ENCODE measurements at regions of chr12 and their contacts with region 1.

Region 1: DNA sequence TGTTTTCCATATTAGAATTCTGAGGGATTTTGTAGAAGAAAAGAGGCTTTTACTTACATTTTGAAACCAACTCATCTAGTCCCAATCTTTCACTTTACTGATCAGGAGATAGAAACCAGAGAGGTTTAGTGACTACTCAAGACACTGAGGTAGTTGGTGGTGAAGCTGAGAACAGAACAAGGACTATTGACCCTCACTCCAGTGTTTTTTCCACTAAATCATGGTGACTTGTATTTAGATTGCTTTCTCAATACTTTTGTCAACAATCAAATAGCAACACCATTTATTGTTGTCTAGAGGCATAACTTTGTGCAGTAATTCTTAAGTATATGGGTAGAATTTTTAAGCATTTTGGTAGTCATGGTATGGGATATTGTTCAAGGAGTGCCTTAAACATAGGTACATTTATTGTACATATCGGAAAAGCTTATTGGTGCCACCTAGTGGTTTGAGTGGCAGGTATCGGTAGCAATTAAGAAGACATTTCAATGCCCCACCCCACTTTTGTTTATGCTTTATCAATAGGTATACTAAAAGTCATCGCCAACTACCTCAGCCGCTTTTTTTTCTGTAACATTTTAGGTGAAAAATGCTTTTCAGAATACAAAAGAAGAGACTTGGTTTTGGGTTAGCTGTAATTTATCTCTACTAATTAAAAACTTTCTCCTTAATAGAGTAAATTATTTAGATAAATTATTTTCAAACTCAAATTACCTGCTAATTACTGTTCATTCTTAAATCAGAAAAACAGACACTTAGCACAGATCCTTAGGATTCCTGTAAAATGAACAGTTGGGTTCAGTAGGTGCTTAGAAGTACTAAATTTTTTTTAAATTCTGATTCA is 47.3 kb upstream of the PAWR start:
- DNase-seq: no peak
- ATAC-seq: peak; percentile 49
- H3K4me3 Mint-ChIP-seq: no peak overlapping the region
- H3K27ac Mint-ChIP-seq: no peak overlapping the region
- H3K4me1 Mint-ChIP-seq: no peaks in the 10 kb centered on the region
- H3K27me3 Mint-ChIP-seq: peaks cover 5% of the 10 kb centered on the region
- CTCF ChIP-seq: no peak

Region 2: GRCh38 chr12:78146365-78146772 is 1591.7 kb before region 1 on chr12:
- CTCF ChIA-PET with region 1: no interaction called
- POLR2A ChIA-PET with region 1: no interaction called
- intact Hi-C with region 1: loop called (anchors 1 kb)
- DNase-seq: no peak
- ATAC-seq: peak; percentile 47
- H3K4me3 Mint-ChIP-seq: no peak overlapping the region
- H3K27ac Mint-ChIP-seq: no peak overlapping the region
- H3K4me1 Mint-ChIP-seq: no peaks in the 10 kb centered on the region
- H3K27me3 Mint-ChIP-seq: no peaks in the 10 kb centered on the region
- CTCF ChIP-seq: peak; percentile 69

Region 3: DNA sequence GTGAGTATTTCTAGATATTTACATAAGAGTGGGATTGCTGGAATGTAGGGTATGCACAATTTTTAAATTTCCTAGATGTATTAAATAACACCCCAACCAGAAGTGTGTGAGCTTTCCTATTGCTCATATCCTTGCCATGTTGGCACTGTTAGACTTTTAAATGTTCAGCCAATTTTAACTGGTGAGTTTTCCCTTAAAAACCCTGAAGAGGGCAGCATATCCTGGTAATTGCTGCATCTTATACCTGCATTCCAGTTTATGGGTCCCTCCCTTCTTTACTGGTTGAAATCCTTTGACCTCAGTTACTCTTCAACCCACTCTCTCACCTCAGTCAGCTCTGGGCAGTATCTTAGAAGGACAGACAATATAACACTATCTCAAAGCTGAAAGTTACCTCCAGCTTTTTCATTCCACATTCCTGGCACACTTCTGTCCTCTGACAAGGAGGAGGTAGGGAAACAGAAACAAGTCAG is 317.9 kb before region 1 on chr12:
- CTCF ChIA-PET with region 1: interaction called, 9 read pairs
- POLR2A ChIA-PET with region 1: no interaction called
- intact Hi-C with region 1: loop called (anchors 1 kb)
- DNase-seq: no peak
- ATAC-seq: no peak
- H3K4me3 Mint-ChIP-seq: no peak overlapping the region
- H3K27ac Mint-ChIP-seq: no peak overlapping the region
- H3K4me1 Mint-ChIP-seq: no peaks in the 10 kb centered on the region
- H3K27me3 Mint-ChIP-seq: no peaks in the 10 kb centered on the region
- CTCF ChIP-seq: no peak

Region 4: DNA sequence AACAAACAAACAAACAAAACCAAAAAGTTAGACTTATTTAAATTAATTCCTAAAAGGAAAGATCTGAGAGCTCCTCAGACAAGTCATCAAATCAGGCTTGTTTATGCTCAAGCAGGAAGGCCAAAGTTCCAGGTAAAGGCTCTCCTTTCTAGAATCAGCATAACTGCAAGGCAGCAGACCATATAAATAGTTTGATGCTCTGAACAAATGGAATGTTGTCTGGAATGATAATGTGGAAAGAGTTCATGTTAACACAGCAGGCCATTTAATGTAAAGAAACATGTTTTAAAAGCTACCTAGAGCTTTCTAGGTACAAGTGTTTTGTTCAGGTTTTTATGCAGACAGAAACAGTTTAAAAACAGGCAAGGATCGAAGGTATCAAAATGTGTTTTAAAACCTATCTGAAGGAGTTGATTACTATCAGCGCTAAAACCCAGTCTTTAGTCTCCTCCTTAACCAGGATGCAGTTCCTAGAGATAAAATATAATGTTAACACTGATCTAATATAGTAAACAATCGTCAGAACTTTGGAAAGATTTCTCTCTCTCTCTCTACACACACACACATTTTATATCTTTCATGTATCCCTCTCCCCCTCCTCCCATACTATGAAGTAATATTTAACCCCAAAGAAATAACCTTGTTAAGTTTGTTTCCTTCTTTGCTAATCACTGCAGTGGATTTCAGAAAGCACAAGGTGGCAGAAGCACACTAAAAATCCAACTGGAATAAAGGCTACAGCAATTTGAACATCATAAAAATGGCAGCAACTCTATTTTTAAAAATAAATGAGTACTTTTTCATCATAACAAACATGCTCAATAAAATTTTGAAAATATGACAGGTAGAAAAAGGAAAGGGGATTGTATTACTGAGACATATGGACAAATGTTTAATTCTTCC is 182.8 kb before region 1 on chr12:
- CTCF ChIA-PET with region 1: interaction called, 4 read pairs
- POLR2A ChIA-PET with region 1: no interaction called
- intact Hi-C with region 1: loop called (anchors 1 kb)
- DNase-seq: no peak
- ATAC-seq: no peak
- H3K4me3 Mint-ChIP-seq: no peak overlapping the region
- H3K27ac Mint-ChIP-seq: no peak overlapping the region
- H3K4me1 Mint-ChIP-seq: peaks cover 8% of the 10 kb centered on the region
- H3K27me3 Mint-ChIP-seq: no peaks in the 10 kb centered on the region
- CTCF ChIP-seq: no peak

Region 5: GRCh38 chr12:79911889-79912656 is 174.0 kb after region 1 on chr12:
- CTCF ChIA-PET with region 1: no interaction called
- POLR2A ChIA-PET with region 1: no interaction called
- intact Hi-C with region 1: no loop called
- DNase-seq: no peak
- ATAC-seq: no peak
- H3K4me3 Mint-ChIP-seq: no peak overlapping the region
- H3K27ac Mint-ChIP-seq: peak overlapping the region; percentile 2
- H3K4me1 Mint-ChIP-seq: peaks cover 65% of the 10 kb centered on the region
- H3K27me3 Mint-ChIP-seq: no peaks in the 10 kb centered on the region
- CTCF ChIP-seq: no peak

Region 6: GRCh38 chr12:79935021-79935623 is 197.0 kb after region 1 on chr12 and contains the start of gene PPP1R12A:
- CTCF ChIA-PET with region 1: no interaction called
- POLR2A ChIA-PET with region 1: no interaction called
- intact Hi-C with region 1: no loop called
- DNase-seq: peak; percentile 94
- ATAC-seq: peak; percentile 83
- H3K4me3 Mint-ChIP-seq: peak within 1 kb of the TSS; percentile 99
- H3K27ac Mint-ChIP-seq: peak within 1 kb of the TSS; percentile 98
- H3K4me1 Mint-ChIP-seq: peaks cover 48% of the 10 kb centered on the region
- H3K27me3 Mint-ChIP-seq: no peaks in the 10 kb centered on the region
- CTCF ChIP-seq: no peak
- total RNA-seq, gene PPP1R12A: 72.9 and 90.4 TPM in 2 replicates

Region 7: GRCh38 chr12:80269803-80270552 is 531.9 kb after region 1 on chr12:
- CTCF ChIA-PET with region 1: no interaction called
- POLR2A ChIA-PET with region 1: no interaction called
- intact Hi-C with region 1: loop called (anchors 10 kb)
- DNase-seq: no peak
- ATAC-seq: no peak
- H3K4me3 Mint-ChIP-seq: no peak overlapping the region
- H3K27ac Mint-ChIP-seq: no peak overlapping the region
- H3K4me1 Mint-ChIP-seq: no peaks in the 10 kb centered on the region
- H3K27me3 Mint-ChIP-seq: peaks cover 2% of the 10 kb centered on the region
- CTCF ChIP-seq: peak; percentile 6

Measured in activated B cell treated with CpG ODN at 0.5 μM for 24 hours (primary cell).